Cardiac septum (tissue), 1 donor: ENCODE measurements at regions of chrX and their contacts with region 1.

Region 1: GRCh38 chrX:17788439-17788838 is 51.1 kb downstream of the SCML1 start:
- DNase-seq: no peak

Region 2: DNA sequence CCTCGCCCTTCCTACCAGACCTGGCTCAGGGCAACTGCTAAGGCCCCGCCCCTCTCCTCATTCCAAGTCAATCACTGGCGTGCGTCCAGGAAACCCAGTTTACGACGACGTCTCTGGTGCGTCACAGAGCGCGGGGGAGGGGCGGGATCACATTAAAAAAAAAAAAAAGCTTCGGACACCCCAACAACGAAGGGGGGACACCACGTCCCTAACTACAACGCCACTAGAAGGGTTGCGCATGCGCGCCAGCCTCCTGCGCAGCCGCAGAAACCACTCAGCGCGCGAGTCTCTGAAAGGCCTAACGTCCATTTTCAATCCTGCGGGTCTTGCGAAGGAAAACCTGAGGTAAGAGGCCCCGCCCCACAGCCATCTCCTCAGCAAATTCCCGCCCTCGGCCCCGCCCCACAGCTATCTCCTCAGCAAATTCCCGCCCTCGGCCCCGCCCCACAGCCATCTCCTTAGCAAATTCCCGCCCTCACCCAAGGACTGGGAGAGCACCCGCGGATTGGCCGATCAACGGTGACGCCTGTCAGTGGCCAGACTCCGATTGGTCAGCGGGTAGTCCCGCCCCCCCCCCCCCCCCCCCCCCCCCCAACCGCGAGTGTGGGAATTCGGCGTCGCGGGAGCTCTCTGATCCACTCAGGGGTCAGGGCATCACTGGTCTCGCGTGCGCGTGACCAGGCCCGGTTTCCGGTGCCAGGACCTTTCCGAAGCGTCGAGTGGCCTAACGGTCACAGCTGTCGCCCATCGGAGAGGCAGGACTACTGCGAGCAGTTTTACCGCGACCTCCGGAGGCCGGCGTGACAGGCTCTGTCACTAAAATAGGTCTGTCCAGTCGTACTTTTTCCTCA is 51.4 kb before region 1 on chrX and contains the start of gene SCML1:
- intact Hi-C with region 1: no loop called
- DNase-seq: peak; percentile 96
- total RNA-seq, gene SCML1: 8.2 TPM

Region 3: DNA sequence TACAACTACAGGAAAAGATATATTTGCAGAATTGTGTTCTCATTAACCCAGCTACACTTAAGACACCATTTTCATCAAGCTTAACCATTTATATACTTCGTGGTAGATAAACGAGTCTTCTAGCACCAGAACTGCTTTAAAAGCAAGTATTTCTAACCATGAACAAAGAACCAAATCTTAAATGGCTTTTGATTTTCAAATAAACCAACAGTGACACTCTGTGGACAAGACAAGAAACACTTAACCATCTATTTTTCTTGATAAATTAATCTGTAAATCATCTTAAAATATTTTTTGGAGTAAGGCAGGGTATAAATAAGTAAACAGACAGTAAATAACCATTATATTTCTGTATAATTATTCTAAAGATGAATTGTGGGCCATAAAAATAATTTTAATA is 422.0 kb after region 1 on chrX:
- intact Hi-C with region 1: loop called (anchors 2 kb)
- DNase-seq: no peak